Naive thymus-derived CD4-positive, alpha-beta T cell (primary cell): ENCODE measurements at regions of chr19 and their contacts with region 1.

Region 1: GRCh38 chr19:10403137-10404021 is at the start of gene CDC37:
- DNase-seq: peak; percentile 95 to 99 (median 97)
- ATAC-seq: peak; percentile 88
- H3K4me3 ChIP-seq: peak within 1 kb of the TSS; percentile 87
- H3K4me3 Mint-ChIP-seq: peak within 1 kb of the TSS; percentile 90 to 97 (median 95)
- H3K27ac ChIP-seq: peak within 1 kb of the TSS; percentile 97
- H3K27ac Mint-ChIP-seq: peak within 1 kb of the TSS; percentile 80 to 97 (median 95)
- H3K4me1 ChIP-seq: peaks cover 55 to 59% of the 10 kb centered on the region in 2 donors
- H3K4me1 Mint-ChIP-seq: peaks cover 40 to 85% (median 59%) of the 10 kb centered on the region in 7 donors
- H3K27me3 ChIP-seq: no peaks in the 10 kb centered on the region
- H3K27me3 Mint-ChIP-seq: peaks cover 0 to 3% (median 0%) of the 10 kb centered on the region in 5 donors
- total RNA-seq, gene CDC37: 169 to 229 (median 180) TPM

Region 2: GRCh38 chr19:8858260-8858659 is 1545.1 kb before region 1 on chr19:
- CTCF ChIA-PET with region 1: no interaction called
- POLR2A ChIA-PET with region 1: no interaction called
- intact Hi-C with region 1: no loop called
- DNase-seq: no peak
- ATAC-seq: no peak
- H3K4me3 ChIP-seq: no peak overlapping the region
- H3K4me3 Mint-ChIP-seq: no peak overlapping the region
- H3K27ac ChIP-seq: no peak overlapping the region
- H3K27ac Mint-ChIP-seq: no peak overlapping the region
- H3K4me1 ChIP-seq: no peaks in the 10 kb centered on the region
- H3K4me1 Mint-ChIP-seq: no peaks in the 10 kb centered on the region
- H3K27me3 ChIP-seq: no peaks in the 10 kb centered on the region
- H3K27me3 Mint-ChIP-seq: peaks cover 0 to 41% (median 40%) of the 10 kb centered on the region in 5 donors

Region 3: DNA sequence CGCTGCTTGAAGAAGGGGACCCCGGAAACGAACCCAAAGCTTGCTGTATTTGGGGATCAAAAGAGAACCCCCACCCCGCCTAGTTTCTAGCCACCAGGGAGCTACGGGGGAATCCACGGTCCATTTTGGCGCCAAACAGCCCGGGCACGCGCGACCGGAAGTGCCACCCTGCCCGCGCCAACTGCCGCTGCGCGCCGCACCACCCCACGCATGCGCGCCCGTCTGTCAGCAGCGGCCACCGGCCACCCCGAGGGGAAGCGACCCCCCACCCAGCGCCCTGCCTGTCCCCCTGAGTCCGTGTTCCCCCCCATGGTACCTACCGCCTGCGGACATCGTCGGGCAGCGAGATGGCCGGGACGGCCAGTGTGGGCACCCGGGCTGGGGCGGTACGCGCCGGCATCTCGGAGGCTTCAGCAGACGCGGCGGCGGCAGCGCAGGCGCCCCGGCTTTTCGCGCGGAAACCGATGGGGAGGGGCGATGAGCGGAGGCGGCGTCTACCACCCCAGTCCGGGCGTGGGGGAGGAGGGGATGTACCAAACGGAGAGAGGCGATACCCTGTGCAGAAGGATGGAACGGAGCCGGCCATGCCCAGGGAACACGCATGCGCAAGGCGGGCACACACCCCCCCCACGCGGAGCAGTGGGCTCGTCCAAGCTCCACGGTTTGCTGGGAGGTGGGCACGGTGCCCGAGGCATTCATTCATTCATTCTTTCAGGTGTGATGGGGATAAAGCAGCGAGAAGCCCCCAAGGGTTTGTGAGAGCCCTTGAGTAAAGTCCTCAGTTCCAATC is 208.7 kb before region 1 on chr19 and contains the start of gene DNMT1:
- CTCF ChIA-PET with region 1: no interaction called
- POLR2A ChIA-PET with region 1: no interaction called
- intact Hi-C with region 1: loop called in 1 of 2 experiments (anchors 1 kb)
- DNase-seq: peak; percentile 87 to 98 (median 93)
- ATAC-seq: peak; percentile 99
- H3K4me3 ChIP-seq: peak within 1 kb of the TSS; percentile 88
- H3K4me3 Mint-ChIP-seq: peak within 1 kb of the TSS; percentile 87 to 98 (median 95)
- H3K27ac ChIP-seq: peak within 1 kb of the TSS; percentile 81
- H3K27ac Mint-ChIP-seq: peak within 1 kb of the TSS; percentile 82 to 96 (median 92)
- H3K4me1 ChIP-seq: peaks cover 7 to 20% of the 10 kb centered on the region in 2 donors
- H3K4me1 Mint-ChIP-seq: peaks cover 14 to 48% (median 40%) of the 10 kb centered on the region in 7 donors
- H3K27me3 ChIP-seq: no peaks in the 10 kb centered on the region
- H3K27me3 Mint-ChIP-seq: no peaks in the 10 kb centered on the region
- total RNA-seq, gene DNMT1: 175 to 334 (median 194) TPM

Region 4: DNA sequence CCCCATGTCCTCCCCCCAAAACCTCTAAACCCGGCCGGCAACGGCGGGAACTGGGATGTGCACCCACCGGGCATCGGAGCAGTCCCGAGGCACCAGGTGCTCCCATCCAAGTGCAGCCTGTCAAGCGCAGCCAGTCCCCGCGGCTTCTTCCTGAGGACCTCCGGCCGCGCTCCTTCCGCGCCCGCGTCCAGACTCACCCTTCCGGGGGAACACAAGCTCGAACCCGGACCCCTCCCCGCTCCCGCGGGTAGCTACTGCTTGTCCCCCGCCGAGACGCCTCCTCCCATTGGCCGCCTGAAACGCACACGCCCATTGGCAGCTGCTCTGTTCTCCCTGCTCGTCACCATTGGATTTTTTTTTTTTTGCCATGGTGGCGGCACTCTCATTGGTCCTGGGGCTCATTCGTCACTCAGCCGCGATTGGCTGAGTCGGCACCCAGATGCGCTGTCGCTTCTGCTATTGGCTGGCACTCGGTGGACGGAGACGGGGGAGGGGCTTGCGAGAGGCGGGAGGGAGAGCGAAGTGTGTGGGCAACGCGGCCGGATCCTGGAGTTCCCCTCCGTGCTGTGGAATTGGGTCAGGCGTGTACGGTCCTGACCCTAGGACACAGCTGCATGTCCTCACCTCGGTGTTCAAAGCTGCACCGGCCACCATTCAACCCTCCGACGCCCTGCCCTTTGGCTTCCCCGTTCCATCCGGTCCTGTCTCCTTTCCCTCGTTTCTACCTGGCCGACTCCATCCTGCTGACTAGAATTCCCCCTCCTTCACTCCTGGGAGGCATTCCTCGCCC is 22.9 kb before region 1 on chr19 and contains the start of gene TYK2:
- CTCF ChIA-PET with region 1: no interaction called
- POLR2A ChIA-PET with region 1: interaction called, 6 read pairs
- intact Hi-C with region 1: loop called (anchors 1 to 2 kb)
- DNase-seq: peak; percentile 94 to 99 (median 97)
- ATAC-seq: peak; percentile 98
- H3K4me3 ChIP-seq: peak within 1 kb of the TSS; percentile 94
- H3K4me3 Mint-ChIP-seq: peak within 1 kb of the TSS; percentile 93 to 99 (median 94)
- H3K27ac ChIP-seq: peak within 1 kb of the TSS; percentile 84
- H3K27ac Mint-ChIP-seq: peak within 1 kb of the TSS; percentile 88 to 97 (median 93)
- H3K4me1 ChIP-seq: peaks cover 5 to 10% of the 10 kb centered on the region in 2 donors
- H3K4me1 Mint-ChIP-seq: peaks cover 14 to 34% (median 23%) of the 10 kb centered on the region in 7 donors
- H3K27me3 ChIP-seq: no peaks in the 10 kb centered on the region
- H3K27me3 Mint-ChIP-seq: peaks cover 0 to 3% (median 0%) of the 10 kb centered on the region in 5 donors
- total RNA-seq, gene TYK2: 224 to 346 (median 284) TPM

Region 5: GRCh38 chr19:10424011-10424637 is 20.7 kb after region 1 on chr19:
- CTCF ChIA-PET with region 1: interaction called, 97 read pairs
- POLR2A ChIA-PET with region 1: interaction called, 32 read pairs
- intact Hi-C with region 1: loop called in 1 of 2 experiments (anchors 1 kb)
- DNase-seq: peak in 8 of 9 donors; percentile 44 to 81 (median 64)
- ATAC-seq: peak; percentile 33
- H3K4me3 ChIP-seq: peak overlapping the region; percentile 40
- H3K4me3 Mint-ChIP-seq: peak overlapping the region in 7 of 10 donors; percentile 17 to 86 (median 61)
- H3K27ac ChIP-seq: no peak overlapping the region
- H3K27ac Mint-ChIP-seq: peak overlapping the region in 2 of 9 donors; percentile 36 to 81
- H3K4me1 ChIP-seq: peaks cover 37 to 61% of the 10 kb centered on the region in 2 donors
- H3K4me1 Mint-ChIP-seq: peaks cover 40 to 77% (median 51%) of the 10 kb centered on the region in 7 donors
- H3K27me3 ChIP-seq: peaks cover 9 to 32% of the 10 kb centered on the region in 2 donors
- H3K27me3 Mint-ChIP-seq: peaks cover 18 to 52% (median 43%) of the 10 kb centered on the region in 5 donors

Region 6: GRCh38 chr19:10478903-10479384 is 75.6 kb after region 1 on chr19:
- CTCF ChIA-PET with region 1: no interaction called
- POLR2A ChIA-PET with region 1: no interaction called
- intact Hi-C with region 1: loop called (anchors 1 kb)
- DNase-seq: peak; percentile 67 to 94 (median 90)
- ATAC-seq: peak; percentile 98
- H3K4me3 ChIP-seq: peak overlapping the region; percentile 58
- H3K4me3 Mint-ChIP-seq: peak overlapping the region in 9 of 10 donors; percentile 64 to 81 (median 72)
- H3K27ac ChIP-seq: peak overlapping the region; percentile 53
- H3K27ac Mint-ChIP-seq: peak overlapping the region in 8 of 9 donors; percentile 28 to 90 (median 83)
- H3K4me1 ChIP-seq: peaks cover 7 to 11% of the 10 kb centered on the region in 2 donors
- H3K4me1 Mint-ChIP-seq: peaks cover 7 to 32% (median 15%) of the 10 kb centered on the region in 7 donors
- H3K27me3 ChIP-seq: no peaks in the 10 kb centered on the region
- H3K27me3 Mint-ChIP-seq: no peaks in the 10 kb centered on the region

Region 7: DNA sequence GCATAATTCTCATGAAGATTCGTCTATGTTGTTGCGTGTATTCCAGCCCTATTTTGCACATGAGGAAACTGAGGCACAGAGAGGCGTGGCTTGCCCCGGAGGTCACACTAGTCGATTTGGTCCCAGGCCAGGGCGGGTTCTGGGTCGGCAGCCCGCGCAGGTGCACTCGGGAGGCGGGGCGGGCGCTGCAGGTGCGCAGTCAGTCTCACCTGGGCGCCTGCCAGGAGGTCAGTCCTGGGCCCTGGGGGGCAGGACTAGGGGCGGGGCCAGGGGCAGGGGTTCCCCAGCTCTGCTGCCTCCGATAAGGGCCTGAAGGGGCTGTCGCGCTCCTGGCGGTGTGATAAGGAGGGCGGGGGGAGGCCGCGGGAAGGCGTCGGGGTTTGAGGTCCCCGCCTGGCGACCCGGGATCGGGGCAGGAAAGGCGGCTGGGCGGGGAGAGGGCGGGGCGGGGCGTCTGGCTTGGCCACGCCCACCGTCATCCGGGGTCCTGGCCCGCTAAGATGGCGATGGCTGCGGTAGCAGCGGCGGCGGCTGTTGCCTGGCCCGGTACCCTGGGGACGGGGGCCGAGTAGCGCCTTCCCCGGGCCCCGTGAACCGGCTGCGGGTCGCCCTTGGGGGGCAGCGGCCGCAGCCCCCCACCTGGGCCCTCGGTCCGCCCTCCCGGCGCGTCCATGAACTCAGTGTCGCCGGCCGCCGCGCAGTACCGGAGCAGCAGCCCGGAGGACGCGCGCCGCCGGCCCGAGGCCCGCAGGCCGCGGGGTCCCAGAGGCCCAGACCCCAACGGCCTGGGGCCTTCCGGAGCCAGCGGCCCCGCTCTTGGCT is 140.3 kb after region 1 on chr19 and contains the start of gene ATG4D:
- CTCF ChIA-PET with region 1: no interaction called
- POLR2A ChIA-PET with region 1: no interaction called
- intact Hi-C with region 1: loop called in 1 of 2 experiments (anchors 5 kb)
- DNase-seq: peak; percentile 77 to 90 (median 84)
- ATAC-seq: peak; percentile 93
- H3K4me3 ChIP-seq: peak within 1 kb of the TSS; percentile 83
- H3K4me3 Mint-ChIP-seq: peak within 1 kb of the TSS; percentile 83 to 93 (median 88)
- H3K27ac ChIP-seq: peak within 1 kb of the TSS; percentile 96
- H3K27ac Mint-ChIP-seq: peak within 1 kb of the TSS; percentile 72 to 91 (median 87)
- H3K4me1 ChIP-seq: peaks cover 13 to 19% of the 10 kb centered on the region in 2 donors
- H3K4me1 Mint-ChIP-seq: peaks cover 8 to 27% (median 16%) of the 10 kb centered on the region in 7 donors
- H3K27me3 ChIP-seq: no peaks in the 10 kb centered on the region
- H3K27me3 Mint-ChIP-seq: peaks cover 4 to 28% (median 5%) of the 10 kb centered on the region in 5 donors
- total RNA-seq, gene ATG4D: 41.7 to 70.3 (median 56.7) TPM

Region 8: GRCh38 chr19:11090054-11090900 is 686.9 kb after region 1 on chr19:
- CTCF ChIA-PET with region 1: no interaction called
- POLR2A ChIA-PET with region 1: no interaction called
- intact Hi-C with region 1: loop called in 1 of 2 experiments (anchors 10 kb)
- DNase-seq: peak; percentile 89 to 97 (median 96)
- ATAC-seq: peak; percentile 90
- H3K4me3 ChIP-seq: peak overlapping the region; percentile 83
- H3K4me3 Mint-ChIP-seq: peak overlapping the region; percentile 85 to 94 (median 89)
- H3K27ac ChIP-seq: peak overlapping the region; percentile 91
- H3K27ac Mint-ChIP-seq: peak overlapping the region; percentile 88 to 99 (median 96)
- H3K4me1 ChIP-seq: peaks cover 24 to 41% of the 10 kb centered on the region in 2 donors
- H3K4me1 Mint-ChIP-seq: peaks cover 13 to 51% (median 44%) of the 10 kb centered on the region in 7 donors
- H3K27me3 ChIP-seq: no peaks in the 10 kb centered on the region
- H3K27me3 Mint-ChIP-seq: peaks cover 0 to 2% (median 0%) of the 10 kb centered on the region in 5 donors